Lower leg skin (tissue), 4 donors: ENCODE measurements at regions of chr15 and their contacts with region 1.

Region 1: GRCh38 chr15:60155666-60156065 is 151.6 kb downstream of the FOXB1 start:
- DNase-seq: no peak
- H3K4me3 ChIP-seq: no peak overlapping the region
- CTCF ChIP-seq: no peak
- POLR2A ChIP-seq: no peak

Region 2: DNA sequence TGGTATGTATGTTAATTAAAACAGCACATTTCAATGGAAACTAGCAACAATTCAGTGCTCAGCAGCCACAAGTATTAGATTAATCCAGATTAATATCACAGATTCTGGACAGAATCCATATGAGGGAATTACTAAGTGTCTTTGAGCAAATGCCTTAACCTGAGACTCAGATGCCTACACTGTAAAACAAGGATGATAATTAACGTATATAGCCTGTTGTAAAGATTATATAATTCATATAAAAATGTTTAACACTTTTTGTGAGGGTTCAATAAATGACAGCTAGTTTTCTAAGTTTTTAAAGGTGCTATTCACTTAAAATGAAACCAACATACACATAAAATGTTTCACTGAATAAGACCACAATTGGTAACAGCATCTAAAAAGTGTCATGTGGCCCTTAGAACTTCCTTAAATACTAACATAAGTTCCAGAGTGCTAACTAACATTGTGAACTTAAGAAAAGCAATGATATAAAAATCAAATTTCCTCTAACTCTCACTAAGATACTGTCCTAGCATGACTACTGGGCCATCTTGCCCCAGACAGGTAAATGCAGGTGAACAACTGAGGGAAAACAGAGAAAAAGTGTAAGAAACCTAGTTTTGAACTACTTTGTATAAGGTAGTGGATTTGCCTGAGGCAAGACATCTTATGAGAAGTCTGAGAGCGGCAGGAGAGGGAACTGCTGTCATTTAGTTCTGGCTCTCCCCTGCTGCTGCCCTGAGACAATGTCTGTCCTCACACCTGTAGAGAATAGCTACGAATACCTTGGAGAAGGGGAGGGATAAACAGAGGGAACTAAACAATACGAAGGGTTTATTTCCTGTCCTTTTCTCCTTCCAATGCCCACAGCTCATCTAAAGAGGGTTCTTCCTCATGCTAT is 1557.5 kb before region 1 on chr15:
- intact Hi-C with region 1: loop called (anchors 10 kb)
- DNase-seq: no peak
- H3K4me3 ChIP-seq: no peak overlapping the region
- CTCF ChIP-seq: no peak
- POLR2A ChIP-seq: no peak

Region 3: GRCh38 chr15:60017538-60018520 is 137.8 kb before region 1 on chr15:
- intact Hi-C with region 1: no loop called
- DNase-seq: no peak
- H3K4me3 ChIP-seq: no peak overlapping the region
- CTCF ChIP-seq: no peak
- POLR2A ChIP-seq: no peak